Ovary (tissue), 10 donors: ENCODE measurements at regions of chr21 and their contacts with region 1.

Region 1: GRCh38 chr21:25607151-25608043 is at the start of gene MRPL39:
- DNase-seq: peak; percentile 79 to 88 (median 84)
- H3K4me3 ChIP-seq: peak within 1 kb of the TSS; percentile 96
- H3K27ac ChIP-seq: peak within 1 kb of the TSS; percentile 47 to 60
- H3K4me1 ChIP-seq: peaks cover 4% of the 10 kb centered on the region
- H3K27me3 ChIP-seq: no peaks in the 10 kb centered on the region
- CTCF ChIP-seq: peak in 2 of 3 donors; percentile 34 to 47
- EP300 ChIP-seq: no peak
- POLR2A ChIP-seq: no peak
- total RNA-seq, gene MRPL39: 15.3 to 22.7 (median 19.0) TPM

Region 2: GRCh38 chr21:25307489-25307888 is 299.9 kb before region 1 on chr21:
- intact Hi-C with region 1: loop called in 1 of 4 experiments (anchors 5 kb)
- DNase-seq: no peak
- H3K4me3 ChIP-seq: no peak overlapping the region
- H3K27ac ChIP-seq: no peak overlapping the region
- H3K4me1 ChIP-seq: no peaks in the 10 kb centered on the region
- H3K27me3 ChIP-seq: no peaks in the 10 kb centered on the region
- CTCF ChIP-seq: no peak
- EP300 ChIP-seq: no peak
- POLR2A ChIP-seq: no peak

Region 3: DNA sequence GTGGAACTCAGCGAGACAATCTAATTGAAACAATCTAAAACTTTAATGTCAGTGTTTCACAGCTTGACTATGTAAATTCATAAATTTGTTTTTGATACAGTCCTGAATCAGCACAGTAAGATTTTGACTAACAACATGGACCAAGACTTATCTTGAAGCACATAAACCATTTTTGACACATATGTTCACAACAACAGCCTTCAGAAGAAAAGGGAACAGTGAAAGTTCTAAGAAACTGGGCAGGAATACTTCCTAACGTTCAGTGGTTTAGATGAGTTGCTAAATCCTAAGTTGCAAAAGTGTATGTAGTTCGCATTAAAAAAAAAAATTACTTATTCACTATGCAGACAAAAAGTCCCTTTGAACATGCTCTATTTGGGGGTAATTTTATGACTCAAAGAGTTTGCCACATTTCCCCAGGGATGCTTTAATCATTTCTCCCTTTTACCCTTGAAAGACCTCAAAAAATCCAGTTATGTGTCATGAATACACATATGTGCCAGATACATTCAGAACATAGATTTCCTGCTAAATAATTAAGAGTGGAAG is 120.3 kb before region 1 on chr21:
- intact Hi-C with region 1: no loop called
- DNase-seq: no peak
- H3K4me3 ChIP-seq: no peak overlapping the region
- H3K27ac ChIP-seq: no peak overlapping the region
- H3K4me1 ChIP-seq: no peaks in the 10 kb centered on the region
- H3K27me3 ChIP-seq: no peaks in the 10 kb centered on the region
- CTCF ChIP-seq: no peak
- EP300 ChIP-seq: no peak
- POLR2A ChIP-seq: no peak

Region 4: GRCh38 chr21:25708467-25709065 is 101.2 kb after region 1 on chr21:
- intact Hi-C with region 1: loop called (anchors 2 to 5 kb)
- DNase-seq: peak in 3 of 5 donors; percentile 15 to 60 (median 33)
- H3K4me3 ChIP-seq: no peak overlapping the region
- H3K27ac ChIP-seq: no peak overlapping the region
- H3K4me1 ChIP-seq: no peaks in the 10 kb centered on the region
- H3K27me3 ChIP-seq: no peaks in the 10 kb centered on the region
- CTCF ChIP-seq: peak; percentile 60 to 69 (median 66)
- EP300 ChIP-seq: no peak
- POLR2A ChIP-seq: no peak

Region 5: DNA sequence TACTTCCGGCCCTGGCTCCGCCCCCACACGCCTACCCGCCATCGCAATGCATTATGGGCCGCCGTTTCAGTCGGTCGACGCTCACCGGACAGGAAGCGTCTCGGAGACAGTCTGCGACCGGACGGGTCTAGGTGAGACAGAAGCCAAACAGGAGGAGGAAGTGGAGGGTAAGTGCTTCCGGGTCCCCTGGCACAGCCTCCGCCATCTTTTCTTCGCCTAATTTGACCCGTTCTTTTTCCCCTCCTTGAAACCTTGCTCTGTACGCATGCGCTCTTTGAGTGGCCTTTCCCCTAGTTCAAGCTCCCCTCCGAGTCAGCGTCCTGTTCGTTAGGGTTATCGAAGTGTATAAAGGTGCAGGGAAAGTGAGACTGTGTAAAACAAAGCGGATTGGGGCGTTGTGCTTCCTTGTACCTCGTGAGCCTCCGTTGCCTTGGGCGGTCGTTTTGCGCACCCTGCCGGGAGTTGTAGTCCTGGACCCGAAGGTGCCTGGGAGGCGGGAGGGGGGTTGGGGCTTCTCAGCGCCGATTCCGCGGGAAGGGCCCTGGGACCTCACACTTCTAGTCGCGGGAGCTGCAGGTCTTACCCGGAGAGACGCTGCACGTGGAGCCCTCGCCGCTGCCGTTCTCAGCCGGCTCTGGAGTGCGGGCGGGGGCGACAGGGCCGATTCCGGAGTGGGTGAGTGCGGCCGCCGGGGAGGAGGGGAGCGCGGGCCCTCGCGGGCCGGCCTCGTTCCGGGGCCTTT is 127.7 kb after region 1 on chr21 and contains the starts of genes ATP5PF and GABPA:
- intact Hi-C with region 1: loop called in 1 of 4 experiments (anchors 10 kb)
- DNase-seq: peak; percentile 95 to 97 (median 96)
- H3K4me3 ChIP-seq: peak within 1 kb of the TSS; percentile 99
- H3K27ac ChIP-seq: peak within 1 kb of the TSS; percentile 95 to 99
- H3K4me1 ChIP-seq: peaks cover 3% of the 10 kb centered on the region
- H3K27me3 ChIP-seq: no peaks in the 10 kb centered on the region
- CTCF ChIP-seq: peak in 2 of 3 donors; percentile 26
- EP300 ChIP-seq: peak; percentile 56
- POLR2A ChIP-seq: peak; percentile 25
- total RNA-seq, gene ATP5PF: 68.8 to 109 (median 76.1) TPM
- total RNA-seq, gene GABPA: 24.1 to 32.5 (median 25.8) TPM